Activated CD4-positive, alpha-beta T cell treated with anti-CD3 and anti-CD28 coated beads for 36 hours (primary cell): ENCODE measurements at regions of chr1 and their contacts with region 1.

Region 1: DNA sequence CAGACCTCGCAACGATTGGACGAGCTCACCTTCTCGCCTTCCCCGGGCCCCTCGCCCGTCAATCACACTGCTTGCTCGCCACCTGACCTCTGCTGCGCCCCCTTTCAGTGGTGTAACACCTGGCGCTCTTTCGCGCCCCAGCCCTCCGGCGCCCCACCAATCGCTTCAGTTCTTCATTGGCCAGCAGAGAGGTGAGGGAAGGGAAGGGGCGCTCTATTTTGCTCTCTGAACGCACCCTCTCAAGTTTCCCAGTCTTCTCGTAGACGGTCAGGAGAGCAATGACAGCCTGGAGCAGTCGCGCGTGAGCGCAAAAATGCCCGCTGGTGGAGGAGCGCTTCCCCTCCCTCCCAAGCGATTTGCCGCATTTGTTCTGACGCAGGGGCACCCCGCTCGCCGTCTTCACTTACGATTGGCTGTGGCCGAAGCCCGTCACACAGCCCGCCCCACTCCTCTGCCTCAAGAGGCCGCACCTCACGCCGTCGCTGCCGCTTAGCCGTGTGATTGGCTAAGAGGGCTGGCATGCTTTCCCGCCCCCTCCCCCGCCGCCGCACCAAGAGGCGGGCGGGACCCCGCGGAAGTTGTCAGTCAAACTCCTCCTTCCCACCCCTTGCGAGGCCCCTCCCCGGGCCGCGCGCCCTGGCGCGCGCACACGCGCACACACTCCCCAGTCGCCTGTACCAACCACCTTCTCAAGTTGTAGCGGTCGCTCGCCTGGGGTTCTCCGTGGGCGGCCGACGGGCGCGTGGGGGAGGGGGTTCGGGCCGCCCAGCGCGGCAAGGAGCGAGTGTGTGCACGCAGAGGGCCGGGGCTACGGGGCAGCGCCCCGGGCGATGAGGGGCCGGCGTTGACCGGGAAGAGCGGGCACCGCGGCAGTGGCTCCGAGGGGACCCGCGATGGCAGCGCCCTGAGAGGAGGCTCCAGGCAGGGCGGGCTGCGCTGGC is at the start of gene PPP2R5A:
- DNase-seq: peak; percentile 99
- ATAC-seq: peak; percentile 93
- H3K4me3 Mint-ChIP-seq: peak within 1 kb of the TSS; percentile 92
- H3K27ac Mint-ChIP-seq: peak within 1 kb of the TSS; percentile 96
- H3K4me1 Mint-ChIP-seq: peaks cover 32% of the 10 kb centered on the region
- H3K27me3 Mint-ChIP-seq: no peaks in the 10 kb centered on the region
- total RNA-seq, gene PPP2R5A: 32.3 to 36.1 TPM

Region 2: DNA sequence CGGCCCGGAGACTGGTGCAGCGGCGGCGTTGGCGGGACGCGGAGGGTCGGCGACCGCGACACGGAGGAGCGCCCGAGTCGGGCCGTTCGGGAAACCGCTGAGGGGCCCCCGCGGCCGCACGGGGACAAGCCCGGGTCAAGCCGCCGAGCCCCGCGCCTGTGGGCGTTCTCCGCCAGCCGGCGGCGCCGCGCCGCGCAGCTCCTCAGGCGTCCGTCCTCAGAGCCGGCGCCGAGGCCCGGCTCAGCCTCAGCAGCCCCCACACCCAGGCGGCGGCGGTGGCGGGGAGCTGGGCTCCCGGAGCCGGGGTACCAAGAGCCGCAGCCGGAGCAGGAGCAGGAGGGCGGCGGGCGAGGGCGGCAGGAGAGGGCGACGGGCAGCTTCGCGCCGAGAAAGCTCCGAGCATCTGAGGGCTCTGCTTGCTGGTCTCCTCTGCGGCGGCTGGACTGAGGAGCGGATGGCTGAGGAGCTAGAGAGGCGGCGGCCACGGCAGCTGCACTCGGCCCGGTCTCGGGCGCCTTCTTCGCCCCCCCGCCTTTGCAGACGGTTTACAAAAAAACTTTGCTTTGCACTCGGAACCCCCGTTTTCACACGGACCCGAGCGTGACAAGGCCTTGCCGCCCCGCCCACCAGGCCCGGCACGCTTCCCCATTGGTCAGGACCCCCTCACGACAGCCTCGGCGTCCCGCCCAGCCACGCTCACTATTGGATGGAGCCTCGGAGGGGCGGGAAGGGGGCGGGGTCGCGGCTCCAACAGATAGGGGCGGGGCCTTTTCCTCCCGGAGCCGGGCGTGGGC is 706.2 kb before region 1 on chr1 and contains the start of gene SLC30A1:
- CTCF ChIA-PET with region 1: no interaction called
- POLR2A ChIA-PET with region 1: no interaction called
- intact Hi-C with region 1: loop called in 1 of 2 experiments (anchors 1 kb)
- DNase-seq: peak; percentile 100
- ATAC-seq: peak; percentile 94
- H3K4me3 Mint-ChIP-seq: peak within 1 kb of the TSS; percentile 89
- H3K27ac Mint-ChIP-seq: peak within 1 kb of the TSS; percentile 85
- H3K4me1 Mint-ChIP-seq: peaks cover 31% of the 10 kb centered on the region
- H3K27me3 Mint-ChIP-seq: no peaks in the 10 kb centered on the region
- total RNA-seq, gene SLC30A1: 2.9 to 4.5 TPM

Region 3: DNA sequence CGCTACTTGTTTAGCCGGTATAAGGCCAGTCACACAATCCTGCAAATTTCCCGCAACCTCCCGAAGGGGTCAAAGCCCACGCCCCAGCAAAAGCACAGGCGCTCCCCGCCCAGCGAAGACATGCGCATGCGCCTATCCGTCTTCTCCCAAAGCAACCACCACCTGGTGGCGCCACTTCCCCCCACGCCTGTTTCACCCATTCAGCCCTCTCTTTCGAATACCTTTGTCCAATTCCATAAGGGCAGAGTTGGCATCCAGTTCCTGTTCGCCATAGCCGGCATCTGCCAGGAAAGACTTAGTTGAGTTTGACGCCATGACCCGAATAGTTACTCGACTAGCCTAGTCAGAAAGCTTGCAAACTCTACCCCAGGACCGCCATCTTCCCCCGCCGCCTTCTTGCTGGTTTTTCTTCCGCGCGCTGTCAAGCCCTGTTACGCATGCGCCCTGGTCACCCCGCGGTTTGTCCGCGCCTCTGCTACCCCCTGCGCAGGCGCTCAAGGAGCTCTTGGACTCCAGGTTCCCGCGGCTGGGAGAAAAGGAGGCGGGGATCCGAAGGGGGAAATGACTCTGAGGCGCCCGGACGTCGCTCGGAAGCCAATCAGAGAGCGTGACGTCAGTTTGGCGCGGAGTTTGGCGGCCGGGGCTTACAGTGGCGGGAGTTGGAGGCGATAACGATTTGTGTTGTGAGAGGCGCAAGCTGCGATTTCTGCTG is 249.7 kb before region 1 on chr1 and contains the starts of genes DTL and INTS7:
- CTCF ChIA-PET with region 1: interaction called, 6 read pairs
- POLR2A ChIA-PET with region 1: interaction called, 5 read pairs
- intact Hi-C with region 1: loop called (anchors 1 kb)
- DNase-seq: peak; percentile 99
- ATAC-seq: peak; percentile 83
- H3K4me3 Mint-ChIP-seq: peak within 1 kb of the TSS; percentile 85
- H3K27ac Mint-ChIP-seq: peak within 1 kb of the TSS; percentile 100
- H3K4me1 Mint-ChIP-seq: peaks cover 56% of the 10 kb centered on the region
- H3K27me3 Mint-ChIP-seq: no peaks in the 10 kb centered on the region
- total RNA-seq, gene DTL: 82.1 to 114 TPM
- total RNA-seq, gene INTS7: 23.7 to 28.6 TPM

Region 4: DNA sequence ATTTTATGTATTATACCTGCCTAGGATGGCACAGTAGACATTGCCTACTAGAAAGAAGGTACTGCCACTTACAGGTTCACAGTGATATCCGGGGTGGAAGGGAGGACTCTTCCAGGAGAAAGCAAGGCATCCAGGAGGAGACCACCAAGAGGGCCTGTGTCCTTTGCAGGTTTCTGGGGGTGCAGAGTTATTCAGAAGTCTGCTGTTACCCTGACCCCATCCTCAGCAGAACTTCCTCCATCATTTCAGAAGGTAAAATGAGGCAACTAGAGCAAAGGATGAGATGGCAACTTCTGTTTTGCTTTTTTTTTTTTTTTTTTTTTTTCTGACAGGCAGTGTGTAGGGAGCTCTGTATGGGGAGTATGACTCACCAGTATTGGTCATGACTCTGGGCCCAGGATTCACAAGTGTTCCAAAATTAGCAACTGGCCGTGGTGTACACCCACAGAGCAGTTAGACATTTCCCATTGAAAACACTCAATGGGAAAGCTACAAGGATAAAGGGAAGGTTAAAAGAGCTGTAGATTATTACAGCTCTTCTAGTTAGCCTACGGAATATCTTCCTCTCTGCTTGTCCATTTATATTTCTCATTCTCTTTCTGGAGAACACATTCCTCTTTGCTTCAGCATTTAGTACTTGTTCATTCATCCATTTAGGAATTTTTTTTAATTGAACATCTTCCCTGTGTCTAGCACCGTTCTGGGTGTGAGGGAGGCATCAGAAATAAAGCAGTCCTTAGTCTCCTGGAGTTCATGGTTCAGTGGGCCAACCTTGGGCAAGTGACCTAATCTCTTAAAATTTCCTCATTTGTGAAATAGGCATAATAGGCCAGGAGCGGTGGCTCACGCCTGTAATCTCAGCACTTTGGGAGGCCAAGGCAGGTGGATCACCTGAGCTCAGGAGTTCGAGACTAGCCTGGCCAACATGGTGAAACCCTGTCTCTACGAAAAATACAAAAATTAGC is 50.3 kb before region 1 on chr1:
- CTCF ChIA-PET with region 1: no interaction called
- POLR2A ChIA-PET with region 1: interaction called, 8 read pairs
- intact Hi-C with region 1: loop called in 1 of 2 experiments (anchors 1 kb)
- DNase-seq: peak; percentile 61
- ATAC-seq: peak; percentile 95
- H3K4me3 Mint-ChIP-seq: no peak overlapping the region
- H3K27ac Mint-ChIP-seq: peak overlapping the region; percentile 39
- H3K4me1 Mint-ChIP-seq: peaks cover 35% of the 10 kb centered on the region
- H3K27me3 Mint-ChIP-seq: no peaks in the 10 kb centered on the region

Region 5: GRCh38 chr1:212305342-212305741 is 20.3 kb after region 1 on chr1:
- CTCF ChIA-PET with region 1: no interaction called
- POLR2A ChIA-PET with region 1: no interaction called
- intact Hi-C with region 1: no loop called
- DNase-seq: no peak
- ATAC-seq: no peak
- H3K4me3 Mint-ChIP-seq: no peak overlapping the region
- H3K27ac Mint-ChIP-seq: no peak overlapping the region
- H3K4me1 Mint-ChIP-seq: peaks cover 61% of the 10 kb centered on the region
- H3K27me3 Mint-ChIP-seq: no peaks in the 10 kb centered on the region

Region 6: GRCh38 chr1:212368073-212368484 is 83.1 kb after region 1 on chr1:
- CTCF ChIA-PET with region 1: interaction called, 8 read pairs
- POLR2A ChIA-PET with region 1: no interaction called
- intact Hi-C with region 1: loop called (anchors 2 kb)
- DNase-seq: peak; percentile 67
- ATAC-seq: peak; percentile 98
- H3K4me3 Mint-ChIP-seq: no peak overlapping the region
- H3K27ac Mint-ChIP-seq: no peak overlapping the region
- H3K4me1 Mint-ChIP-seq: no peaks in the 10 kb centered on the region
- H3K27me3 Mint-ChIP-seq: no peaks in the 10 kb centered on the region

Region 7: GRCh38 chr1:212542761-212543187 is 257.8 kb after region 1 on chr1:
- CTCF ChIA-PET with region 1: no interaction called
- POLR2A ChIA-PET with region 1: no interaction called
- intact Hi-C with region 1: no loop called
- DNase-seq: no peak
- ATAC-seq: no peak
- H3K4me3 Mint-ChIP-seq: no peak overlapping the region
- H3K27ac Mint-ChIP-seq: no peak overlapping the region
- H3K4me1 Mint-ChIP-seq: no peaks in the 10 kb centered on the region
- H3K27me3 Mint-ChIP-seq: peaks cover 4% of the 10 kb centered on the region

Region 8: GRCh38 chr1:212608209-212608955 is 323.4 kb after region 1 on chr1 and contains the start of gene ATF3:
- CTCF ChIA-PET with region 1: no interaction called
- POLR2A ChIA-PET with region 1: no interaction called
- intact Hi-C with region 1: loop called in 1 of 2 experiments (anchors 2 kb)
- DNase-seq: peak; percentile 97
- ATAC-seq: peak; percentile 89
- H3K4me3 Mint-ChIP-seq: peak within 1 kb of the TSS; percentile 91
- H3K27ac Mint-ChIP-seq: peak within 1 kb of the TSS; percentile 96
- H3K4me1 Mint-ChIP-seq: peaks cover 56% of the 10 kb centered on the region
- H3K27me3 Mint-ChIP-seq: peaks cover 45% of the 10 kb centered on the region
- total RNA-seq, gene ATF3: 40.3 to 44.9 TPM